Calu3 (cell line): ENCODE measurements at regions of chr20 and their contacts with region 1.

Region 1: DNA sequence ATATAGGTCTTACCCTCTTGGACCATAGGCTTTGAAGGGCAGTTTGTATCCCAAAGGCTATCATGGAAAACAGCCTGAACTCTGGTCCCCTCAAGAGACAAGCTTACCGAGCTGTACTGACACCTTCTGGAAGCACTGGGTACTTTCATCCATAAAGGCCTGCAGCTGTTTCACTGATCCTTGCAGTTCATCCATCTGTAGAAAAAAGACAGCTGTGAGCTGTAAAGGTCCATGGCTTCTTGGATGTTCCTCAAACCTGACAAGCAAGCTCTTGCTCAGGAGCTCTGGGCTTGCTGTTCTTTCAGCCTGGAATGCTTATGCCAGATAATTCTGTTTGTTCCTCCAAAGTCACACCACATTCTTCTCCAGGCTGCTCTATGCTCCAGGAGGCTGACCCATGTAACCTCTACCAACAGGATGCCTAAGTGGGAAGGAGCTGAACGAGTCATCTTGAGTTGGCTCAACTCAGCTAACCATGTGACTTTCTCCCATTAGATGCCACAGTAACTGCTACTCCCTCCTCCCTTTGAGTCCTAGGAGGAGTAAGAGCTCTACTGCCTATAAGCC is 8.8 kb upstream of the NDRG3 start:
- DNase-seq: peak; percentile 65
- H3K4me3 Mint-ChIP-seq: no peak overlapping the region
- H3K27ac Mint-ChIP-seq: no peak overlapping the region
- H3K4me1 Mint-ChIP-seq: no peaks in the 10 kb centered on the region
- H3K27me3 Mint-ChIP-seq: no peaks in the 10 kb centered on the region
- CTCF ChIP-seq: peak; percentile 74

Region 2: DNA sequence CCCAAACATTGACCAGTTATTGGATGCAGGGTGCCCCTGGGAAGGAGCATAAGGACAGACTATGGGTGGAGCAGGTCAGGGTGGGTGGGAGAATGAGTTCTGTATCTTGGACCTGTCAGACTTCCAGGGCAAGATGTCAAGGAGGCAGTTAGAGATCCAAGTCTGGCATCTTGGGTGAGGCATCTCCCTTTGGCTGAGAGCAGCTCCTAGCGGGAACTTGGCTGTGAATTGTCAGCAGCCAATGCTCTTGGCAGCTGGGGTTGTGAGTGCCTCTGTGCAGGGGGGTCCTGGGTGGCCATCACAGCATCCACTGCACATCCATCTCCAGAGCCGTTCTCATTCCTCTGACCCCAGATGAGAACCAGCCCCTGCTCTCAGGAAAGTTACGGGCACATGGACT is 330.4 kb before region 1 on chr20:
- CTCF ChIA-PET with region 1: no interaction called
- intact Hi-C with region 1: no loop called
- DNase-seq: no peak
- H3K4me3 Mint-ChIP-seq: no peak overlapping the region
- H3K27ac Mint-ChIP-seq: no peak overlapping the region
- H3K4me1 Mint-ChIP-seq: no peaks in the 10 kb centered on the region
- H3K27me3 Mint-ChIP-seq: peaks cover 99% of the 10 kb centered on the region
- CTCF ChIP-seq: no peak

Region 3: DNA sequence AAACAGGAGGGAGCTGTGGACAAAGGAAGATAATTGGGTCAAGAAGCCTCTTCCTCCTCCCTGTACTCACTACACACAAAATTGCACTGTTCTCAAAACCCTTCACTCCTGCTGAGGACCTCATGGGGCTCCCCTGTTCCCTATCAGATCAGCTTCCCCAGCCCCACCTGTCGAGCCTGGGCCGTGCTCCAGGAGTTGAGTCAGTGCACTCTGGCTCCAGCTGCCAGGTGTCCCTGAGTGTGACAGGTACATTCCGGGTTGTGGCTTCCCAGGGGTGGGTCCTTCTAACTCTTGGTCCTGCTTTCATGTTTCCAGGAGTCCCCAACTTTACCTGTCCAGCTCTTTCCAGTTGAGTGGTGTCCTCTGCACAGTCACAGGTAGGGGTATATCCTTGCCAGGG is 140.8 kb before region 1 on chr20:
- CTCF ChIA-PET with region 1: interaction called, 14 read pairs
- intact Hi-C with region 1: loop called (anchors 1 kb)
- DNase-seq: peak; percentile 33
- H3K4me3 Mint-ChIP-seq: no peak overlapping the region
- H3K27ac Mint-ChIP-seq: no peak overlapping the region
- H3K4me1 Mint-ChIP-seq: peaks cover 22% of the 10 kb centered on the region
- H3K27me3 Mint-ChIP-seq: no peaks in the 10 kb centered on the region
- CTCF ChIP-seq: no peak

Region 4: GRCh38 chr20:36666181-36666740 is 88.5 kb before region 1 on chr20:
- CTCF ChIA-PET with region 1: interaction called, 4 read pairs
- intact Hi-C with region 1: loop called (anchors 1 kb)
- DNase-seq: no peak
- H3K4me3 Mint-ChIP-seq: no peak overlapping the region
- H3K27ac Mint-ChIP-seq: no peak overlapping the region
- H3K4me1 Mint-ChIP-seq: no peaks in the 10 kb centered on the region
- H3K27me3 Mint-ChIP-seq: no peaks in the 10 kb centered on the region
- CTCF ChIP-seq: no peak

Region 5: GRCh38 chr20:36941401-36941835 is 186.7 kb after region 1 on chr20:
- CTCF ChIA-PET with region 1: no interaction called
- intact Hi-C with region 1: no loop called
- DNase-seq: no peak
- H3K4me3 Mint-ChIP-seq: no peak overlapping the region
- H3K27ac Mint-ChIP-seq: no peak overlapping the region
- H3K4me1 Mint-ChIP-seq: peaks cover 8% of the 10 kb centered on the region
- H3K27me3 Mint-ChIP-seq: no peaks in the 10 kb centered on the region
- CTCF ChIP-seq: no peak